Activated T-helper 2 cell treated with anti-CD3 and anti-CD28 coated beads, Interferon-gamma antibody, Interleukin-2, Interleukin-4, amounts not matched to agents 10 μg/mL and 5 μg/mL and 100 μg/mL, durations not matched to agents 14 hours and 24 hours and 36 hours (primary cell): ENCODE measurements at regions of chr20 and their contacts with region 1.

Region 1: GRCh38 chr20:13119583-13119982 is 101.5 kb upstream of the ISM1 start:
- DNase-seq: peak; percentile 17
- H3K4me3 Mint-ChIP-seq: no peak overlapping the region
- H3K27ac Mint-ChIP-seq: no peak overlapping the region
- H3K4me1 Mint-ChIP-seq: no peaks in the 10 kb centered on the region
- H3K27me3 Mint-ChIP-seq: peaks cover 5% of the 10 kb centered on the region

Region 2: GRCh38 chr20:13200767-13201500 is 81.4 kb after region 1 on chr20:
- intact Hi-C with region 1: no loop called
- DNase-seq: no peak
- H3K4me3 Mint-ChIP-seq: no peak overlapping the region
- H3K27ac Mint-ChIP-seq: no peak overlapping the region
- H3K4me1 Mint-ChIP-seq: no peaks in the 10 kb centered on the region
- H3K27me3 Mint-ChIP-seq: peaks cover 7% of the 10 kb centered on the region

Region 3: DNA sequence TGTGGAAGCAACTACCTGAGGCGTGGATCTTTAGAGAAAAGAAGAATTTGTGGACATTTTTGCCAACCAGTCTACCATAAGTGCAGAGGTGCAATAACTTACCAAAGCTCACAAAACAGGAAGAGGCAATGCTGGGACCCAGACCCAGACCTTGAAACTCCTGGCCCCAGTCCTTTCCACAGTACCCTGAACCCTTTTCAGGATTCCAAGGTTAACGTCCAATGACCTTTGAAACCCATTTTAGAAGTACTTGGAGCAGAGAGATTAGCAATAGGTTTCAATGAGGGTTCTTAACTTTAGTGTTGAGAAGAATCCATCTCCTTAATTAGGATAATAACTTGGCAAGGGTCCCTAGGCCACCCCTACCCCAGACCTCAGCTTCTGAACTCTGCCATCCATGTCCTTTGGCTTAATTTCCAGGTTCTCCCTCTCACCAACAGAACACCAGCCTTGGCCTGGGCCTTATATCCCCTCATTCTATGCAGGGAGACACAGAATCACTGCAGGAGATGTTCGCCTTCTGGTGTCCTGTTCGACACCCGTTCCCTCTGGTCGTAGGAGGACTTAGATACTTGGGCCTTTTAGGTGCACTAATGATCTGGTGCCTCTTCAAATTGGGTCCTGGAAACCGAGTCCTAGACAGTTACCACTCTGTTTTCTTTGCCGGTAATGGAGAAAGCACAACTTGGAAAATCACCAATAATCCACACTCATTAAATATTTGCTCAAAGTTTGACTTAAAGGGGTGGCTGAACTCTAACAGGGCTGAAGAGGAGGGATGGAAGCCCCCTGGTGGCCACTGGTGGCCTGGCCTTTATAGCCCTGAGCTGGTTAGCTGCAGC is 142.1 kb after region 1 on chr20:
- intact Hi-C with region 1: loop called (anchors 1 kb)
- DNase-seq: peak; percentile 47
- H3K4me3 Mint-ChIP-seq: no peak overlapping the region
- H3K27ac Mint-ChIP-seq: no peak overlapping the region
- H3K4me1 Mint-ChIP-seq: peaks cover 11% of the 10 kb centered on the region
- H3K27me3 Mint-ChIP-seq: no peaks in the 10 kb centered on the region

Region 4: DNA sequence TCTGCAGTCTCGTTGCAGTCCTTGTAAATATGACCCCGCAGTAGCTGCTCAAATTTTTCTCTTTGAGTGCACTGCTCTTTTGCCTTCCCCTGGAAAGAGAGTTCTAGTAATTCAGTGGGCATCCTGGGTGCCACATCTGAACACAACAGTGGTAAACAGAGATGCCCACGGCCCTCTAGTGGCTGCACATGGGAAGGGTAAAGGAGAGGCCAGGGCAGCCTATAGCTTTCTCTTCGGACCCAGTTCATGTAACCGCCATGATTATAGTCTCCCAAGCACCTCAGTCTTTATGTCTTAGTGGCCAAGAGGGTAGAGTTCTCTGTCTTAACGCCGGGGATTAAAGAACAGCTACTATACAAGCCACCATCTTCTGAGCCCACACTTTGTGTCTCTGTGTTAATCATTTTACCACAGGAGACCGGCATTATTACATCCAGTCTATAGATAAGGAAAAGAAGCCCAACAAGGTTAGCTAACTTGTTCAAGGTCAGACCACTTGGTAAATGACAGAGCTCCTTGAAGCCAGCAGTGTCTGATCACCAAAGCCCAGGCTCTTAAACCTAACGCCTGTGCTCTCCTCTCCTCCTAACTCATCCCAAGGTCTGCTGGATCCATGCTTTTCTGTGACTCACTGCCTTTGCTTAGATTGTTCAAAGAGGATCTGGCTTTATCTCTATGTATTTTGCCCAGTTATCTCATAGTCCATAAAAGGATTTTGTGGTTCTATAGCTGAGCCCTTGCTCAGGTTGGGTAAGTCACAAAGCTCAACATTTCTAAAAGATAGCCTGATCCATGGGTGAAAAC is 183.3 kb after region 1 on chr20:
- intact Hi-C with region 1: loop called (anchors 1 kb)
- DNase-seq: peak; percentile 21
- H3K4me3 Mint-ChIP-seq: no peak overlapping the region
- H3K27ac Mint-ChIP-seq: no peak overlapping the region
- H3K4me1 Mint-ChIP-seq: no peaks in the 10 kb centered on the region
- H3K27me3 Mint-ChIP-seq: no peaks in the 10 kb centered on the region

Region 5: GRCh38 chr20:13546497-13547131 is 427.0 kb after region 1 on chr20:
- intact Hi-C with region 1: loop called (anchors 2 kb)
- DNase-seq: peak; percentile 52
- H3K4me3 Mint-ChIP-seq: no peak overlapping the region
- H3K27ac Mint-ChIP-seq: no peak overlapping the region
- H3K4me1 Mint-ChIP-seq: peaks cover 5% of the 10 kb centered on the region
- H3K27me3 Mint-ChIP-seq: no peaks in the 10 kb centered on the region

Region 6: DNA sequence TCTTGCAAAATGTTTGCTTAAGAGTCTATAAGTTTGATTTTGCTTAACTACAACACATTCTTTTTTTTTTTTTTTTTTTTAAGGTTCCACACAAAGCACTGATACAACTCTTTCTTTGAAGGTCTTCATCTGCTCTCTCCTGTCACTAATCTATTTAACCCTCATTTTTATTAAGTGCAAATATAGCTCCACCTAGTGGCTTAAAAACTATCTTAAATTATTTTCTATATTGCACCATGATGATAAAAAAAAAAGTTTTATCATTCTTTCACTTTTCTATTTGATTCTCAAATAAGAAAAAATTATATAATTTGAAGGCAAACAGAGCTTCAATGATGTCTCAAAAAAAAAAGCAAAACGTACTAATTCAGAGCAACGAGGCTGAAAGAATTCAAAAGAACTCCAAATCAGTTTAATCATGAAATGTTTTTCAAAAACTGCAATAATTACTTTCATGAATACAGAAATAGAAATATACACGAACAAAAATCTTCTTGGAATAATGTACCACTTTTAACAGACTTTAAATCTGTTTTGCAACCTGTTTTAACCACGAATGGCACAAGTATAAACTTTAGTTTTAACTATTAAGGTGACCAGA is 652.4 kb after region 1 on chr20:
- intact Hi-C with region 1: loop called (anchors 10 kb)
- DNase-seq: no peak
- H3K4me3 Mint-ChIP-seq: no peak overlapping the region
- H3K27ac Mint-ChIP-seq: no peak overlapping the region
- H3K4me1 Mint-ChIP-seq: peaks cover 12% of the 10 kb centered on the region
- H3K27me3 Mint-ChIP-seq: no peaks in the 10 kb centered on the region